ENCODE measurements at regions of chr14 and their contacts with region 1.

Region 1: DNA sequence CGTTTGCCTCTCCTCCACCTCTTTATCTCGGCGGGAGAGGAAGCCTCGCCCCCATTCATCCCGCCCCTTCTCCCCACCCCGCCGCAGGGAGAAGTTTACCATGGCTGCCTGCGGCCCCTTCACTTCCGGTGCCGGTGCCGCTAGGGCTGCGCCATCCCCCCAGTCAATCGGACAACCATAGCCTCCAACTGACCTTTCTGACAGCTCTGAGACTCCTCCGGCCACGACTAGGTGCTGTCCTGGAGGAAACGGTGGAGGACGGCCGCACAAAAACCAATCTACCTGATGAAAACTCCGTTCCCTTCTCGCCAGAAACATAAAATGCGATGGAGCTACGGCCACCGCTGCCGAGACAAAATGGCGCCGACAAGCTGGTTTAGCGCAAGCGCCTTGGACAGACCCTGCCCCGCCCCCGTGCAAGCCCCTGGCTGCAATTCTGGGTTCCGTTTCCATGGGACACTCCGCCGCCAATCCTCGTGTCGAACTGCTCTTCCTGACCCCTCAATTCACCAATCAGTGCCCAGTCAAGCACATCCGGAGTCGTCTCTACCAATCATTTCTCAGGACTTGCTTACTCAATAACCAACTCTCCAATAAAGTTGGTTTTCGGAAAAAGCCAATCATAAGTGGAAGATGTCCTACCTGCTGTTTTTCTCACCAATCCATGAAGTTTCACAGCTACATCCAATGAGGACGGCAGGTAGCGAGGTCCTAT is 436 bp upstream of the ARID4A start:
- DNase-seq: peak; percentile 98 to 99 (median 99)
- ATAC-seq: peak; percentile 96 to 99 (median 98)
- H3K4me3 ChIP-seq: peak overlapping the region; percentile 70 to 100 (median 94)
- H3K27ac ChIP-seq: peak overlapping the region; percentile 91 to 99 (median 96)
- H3K4me1 ChIP-seq: peaks cover 10 to 57% (median 36%) of the 10 kb centered on the region in 12 donors
- H3K27me3 ChIP-seq: no peaks in the 10 kb centered on the region
- CTCF ChIP-seq: peak in 3 of 12 donors; percentile 5 to 27 (median 27)
- POLR2A ChIP-seq: peak in 1 of 2 donors; percentile 41

Region 2: DNA sequence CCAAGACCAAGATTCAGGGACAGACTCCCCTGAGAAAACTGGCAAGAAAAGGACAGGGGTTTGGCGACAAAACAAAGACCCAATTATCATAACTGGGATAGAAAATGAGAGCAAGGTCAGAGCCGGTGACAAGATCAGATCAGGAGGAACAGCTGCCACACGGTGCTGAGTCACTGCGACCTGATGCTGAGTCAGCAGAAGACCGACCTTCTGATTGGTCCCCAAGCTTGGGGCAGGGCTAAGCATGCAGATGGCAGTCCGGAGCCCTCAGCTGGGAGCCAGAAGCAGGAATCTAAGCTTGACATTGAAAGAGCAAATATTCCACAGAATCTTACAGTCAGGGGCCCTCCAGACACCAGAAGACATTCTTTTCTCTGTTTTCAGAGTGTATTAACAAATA is 126.8 kb before region 1 on chr14:
- intact Hi-C with region 1: no loop called
- DNase-seq: peak; percentile 50 to 80 (median 70)
- ATAC-seq: peak in 3 of 4 donors; percentile 88 to 95 (median 92)
- H3K4me3 ChIP-seq: no peak overlapping the region
- H3K27ac ChIP-seq: no peak overlapping the region
- H3K4me1 ChIP-seq: peaks cover 0 to 7% (median 0%) of the 10 kb centered on the region in 12 donors
- H3K27me3 ChIP-seq: no peaks in the 10 kb centered on the region
- CTCF ChIP-seq: no peak
- POLR2A ChIP-seq: no peak

Region 3: GRCh38 chr14:58239244-58240195 is 58.4 kb before region 1 on chr14:
- intact Hi-C with region 1: loop called in 9 of 10 experiments (anchors 1 to 10 kb)
- DNase-seq: peak; percentile 63 to 83 (median 70)
- ATAC-seq: peak; percentile 27 to 46 (median 35)
- H3K4me3 ChIP-seq: peak overlapping the region; percentile 48 to 74 (median 65)
- H3K27ac ChIP-seq: peak overlapping the region; percentile 19 to 85 (median 76)
- H3K4me1 ChIP-seq: peaks cover 0 to 24% (median 3%) of the 10 kb centered on the region in 12 donors
- H3K27me3 ChIP-seq: no peaks in the 10 kb centered on the region
- CTCF ChIP-seq: no peak
- POLR2A ChIP-seq: no peak

Region 4: GRCh38 chr14:58244556-58245387 is 53.1 kb before region 1 on chr14 and contains the start of gene PSMA3:
- intact Hi-C with region 1: loop called in 9 of 10 experiments (anchors 1 to 10 kb)
- DNase-seq: peak; percentile 98 to 99 (median 98)
- ATAC-seq: peak; percentile 95 to 99 (median 98)
- H3K4me3 ChIP-seq: peak within 1 kb of the TSS; percentile 66 to 96 (median 84)
- H3K27ac ChIP-seq: peak within 1 kb of the TSS; percentile 82 to 99 (median 96)
- H3K4me1 ChIP-seq: peaks cover 4 to 42% (median 30%) of the 10 kb centered on the region in 12 donors
- H3K27me3 ChIP-seq: no peaks in the 10 kb centered on the region
- CTCF ChIP-seq: peak in 3 of 12 donors; percentile 13 to 35 (median 30)
- POLR2A ChIP-seq: peak; percentile 7 to 75
- total RNA-seq, gene PSMA3: 121 to 232 (median 155) TPM

Region 5: DNA sequence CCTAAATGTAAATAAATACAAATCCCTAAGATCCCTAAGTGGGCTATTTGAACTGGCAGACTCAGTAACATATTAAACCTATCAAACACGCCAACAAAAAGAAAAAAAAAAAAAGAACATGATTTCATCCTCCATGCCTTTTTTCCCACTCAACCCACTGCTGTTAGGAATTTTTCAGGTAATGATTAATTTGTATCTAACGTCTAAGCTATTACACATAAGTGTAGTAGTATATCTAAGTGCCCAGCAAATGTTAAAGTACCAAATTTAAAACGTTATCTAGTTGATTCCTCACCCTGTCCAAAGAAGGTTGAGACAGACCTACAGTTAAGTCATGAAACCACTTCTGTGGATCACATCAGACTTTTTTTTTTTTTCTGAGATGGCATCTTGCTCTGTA is 15.9 kb before region 1 on chr14:
- intact Hi-C with region 1: loop called in 1 of 10 experiments (anchors 2 kb)
- DNase-seq: no peak
- ATAC-seq: peak in 3 of 4 donors; percentile 3 to 34 (median 25)
- H3K4me3 ChIP-seq: no peak overlapping the region
- H3K27ac ChIP-seq: peak overlapping the region; percentile 9 to 89 (median 70)
- H3K4me1 ChIP-seq: peaks cover 2 to 46% (median 37%) of the 10 kb centered on the region in 12 donors
- H3K27me3 ChIP-seq: no peaks in the 10 kb centered on the region
- CTCF ChIP-seq: no peak
- POLR2A ChIP-seq: no peak

Measured in heart left ventricle (tissue), 16 donors.